Endothelial cell of umbilical vein (primary cell): ENCODE measurements at regions of chr12 and their contacts with region 1.

Region 1: DNA sequence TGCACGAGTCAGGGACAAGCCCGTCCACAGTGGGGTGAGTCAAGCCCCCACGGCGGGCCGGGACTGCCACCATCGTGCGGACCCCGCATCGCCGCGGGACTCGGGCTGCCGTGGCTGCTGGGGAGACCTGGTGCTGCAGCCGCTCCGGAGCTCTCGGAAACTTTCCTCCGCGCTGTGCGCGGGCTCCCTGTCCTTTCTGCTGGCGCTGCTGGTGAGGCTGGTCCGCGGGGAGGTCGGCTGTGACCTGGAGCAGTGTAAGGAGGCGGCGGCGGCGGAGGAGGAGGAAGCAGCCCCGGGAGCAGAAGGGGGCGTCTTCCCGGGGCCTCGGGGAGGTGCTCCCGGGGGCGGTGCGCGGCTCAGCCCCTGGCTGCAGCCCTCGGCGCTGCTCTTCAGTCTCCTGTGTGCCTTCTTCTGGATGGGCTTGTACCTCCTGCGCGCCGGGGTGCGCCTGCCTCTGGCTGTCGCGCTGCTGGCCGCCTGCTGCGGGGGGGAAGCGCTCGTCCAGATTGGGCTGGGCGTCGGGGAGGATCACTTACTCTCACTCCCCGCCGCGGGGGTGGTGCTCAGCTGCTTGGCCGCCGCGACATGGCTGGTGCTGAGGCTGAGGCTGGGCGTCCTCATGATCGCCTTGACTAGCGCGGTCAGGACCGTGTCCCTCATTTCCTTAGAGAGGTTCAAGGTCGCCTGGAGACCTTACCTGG is 1.1 kb downstream of the PDE3A start:
- DNase-seq: peak; percentile 85
- H3K4me3 ChIP-seq: peak overlapping the region; percentile 87 to 99 (median 97)
- H3K27ac ChIP-seq: peak overlapping the region; percentile 75
- H3K4me1 ChIP-seq: peaks cover 28% of the 10 kb centered on the region
- H3K27me3 ChIP-seq: no peaks in the 10 kb centered on the region
- CTCF ChIP-seq: peak in 1 of 2 donors; percentile 23
- POLR2A ChIP-seq: peak; percentile 71

Region 2: GRCh38 chr12:19994970-19995369 is 374.5 kb before region 1 on chr12:
- CTCF ChIA-PET with region 1: interaction called, 3 read pairs
- POLR2A ChIA-PET with region 1: no interaction called
- dilution Hi-C with region 1: no loop called
- intact Hi-C with region 1: loop called (anchors 2 kb)
- DNase-seq: peak; percentile 63
- H3K4me3 ChIP-seq: no peak overlapping the region
- H3K27ac ChIP-seq: no peak overlapping the region
- H3K4me1 ChIP-seq: peaks cover 20% of the 10 kb centered on the region
- H3K27me3 ChIP-seq: no peaks in the 10 kb centered on the region
- CTCF ChIP-seq: peak in 1 of 2 donors; percentile 10
- POLR2A ChIP-seq: no peak

Region 3: GRCh38 chr12:20097626-20098025 is 271.8 kb before region 1 on chr12:
- CTCF ChIA-PET with region 1: no interaction called
- POLR2A ChIA-PET with region 1: no interaction called
- dilution Hi-C with region 1: no loop called
- intact Hi-C with region 1: no loop called
- DNase-seq: peak; percentile 52
- H3K4me3 ChIP-seq: no peak overlapping the region
- H3K27ac ChIP-seq: no peak overlapping the region
- H3K4me1 ChIP-seq: peaks cover 2% of the 10 kb centered on the region
- H3K27me3 ChIP-seq: no peaks in the 10 kb centered on the region
- CTCF ChIP-seq: no peak
- POLR2A ChIP-seq: no peak

Region 4: DNA sequence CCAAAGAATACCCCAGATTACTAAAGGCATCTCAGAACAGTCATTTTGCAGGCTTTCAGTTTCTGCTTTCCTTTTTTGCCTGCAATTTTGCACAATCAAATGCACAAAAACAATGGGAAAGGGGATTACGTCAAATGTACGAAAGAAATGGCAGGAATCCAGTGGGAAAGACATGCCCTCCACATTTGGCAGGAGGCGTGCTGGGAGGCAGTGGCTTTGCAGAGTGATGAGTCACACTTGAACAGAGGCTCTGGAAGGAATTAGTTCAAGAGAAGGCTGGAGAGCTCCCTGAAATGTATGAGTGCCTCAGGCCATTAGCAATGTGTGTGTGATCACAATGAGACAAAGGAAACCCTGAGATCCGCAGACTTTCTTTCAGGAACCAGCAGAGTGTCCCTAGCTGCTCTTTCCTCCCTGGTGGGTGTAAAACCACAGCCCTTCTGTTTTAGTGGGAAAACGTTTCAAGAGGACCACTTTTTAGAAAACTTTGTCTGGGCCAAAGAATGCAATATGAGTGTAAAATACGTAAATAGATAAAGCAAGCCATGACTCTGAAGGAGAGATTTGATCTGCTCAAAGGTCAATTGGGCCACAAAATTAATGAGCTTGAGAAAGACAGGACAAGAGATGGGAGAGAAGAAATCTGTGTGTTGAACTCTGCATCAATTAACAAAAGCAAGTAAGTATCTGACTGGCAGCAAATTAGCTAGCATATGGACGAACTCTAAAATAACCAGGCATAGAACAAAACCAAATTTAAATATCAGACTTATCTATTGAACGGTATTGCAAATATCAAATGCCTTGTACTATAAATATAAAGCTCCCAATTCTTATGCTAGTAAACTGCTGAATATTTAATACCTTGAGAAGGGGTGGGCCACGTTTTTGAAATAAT is 156.5 kb before region 1 on chr12:
- CTCF ChIA-PET with region 1: no interaction called
- POLR2A ChIA-PET with region 1: no interaction called
- dilution Hi-C with region 1: no loop called
- intact Hi-C with region 1: loop called (anchors 2 kb)
- DNase-seq: peak; percentile 99
- H3K4me3 ChIP-seq: peak overlapping the region in 1 of 3 experiments; percentile 15
- H3K27ac ChIP-seq: peak overlapping the region; percentile 77
- H3K4me1 ChIP-seq: peaks cover 12% of the 10 kb centered on the region
- H3K27me3 ChIP-seq: no peaks in the 10 kb centered on the region
- CTCF ChIP-seq: no peak
- POLR2A ChIP-seq: no peak

Region 5: GRCh38 chr12:20350495-20350894 is 19.0 kb before region 1 on chr12:
- CTCF ChIA-PET with region 1: interaction called, 7 read pairs
- POLR2A ChIA-PET with region 1: no interaction called
- dilution Hi-C with region 1: no loop called
- intact Hi-C with region 1: loop called (anchors 1 kb)
- DNase-seq: peak; percentile 96
- H3K4me3 ChIP-seq: no peak overlapping the region
- H3K27ac ChIP-seq: peak overlapping the region; percentile 92
- H3K4me1 ChIP-seq: peaks cover 21% of the 10 kb centered on the region
- H3K27me3 ChIP-seq: no peaks in the 10 kb centered on the region
- CTCF ChIP-seq: no peak
- POLR2A ChIP-seq: no peak

Region 6: DNA sequence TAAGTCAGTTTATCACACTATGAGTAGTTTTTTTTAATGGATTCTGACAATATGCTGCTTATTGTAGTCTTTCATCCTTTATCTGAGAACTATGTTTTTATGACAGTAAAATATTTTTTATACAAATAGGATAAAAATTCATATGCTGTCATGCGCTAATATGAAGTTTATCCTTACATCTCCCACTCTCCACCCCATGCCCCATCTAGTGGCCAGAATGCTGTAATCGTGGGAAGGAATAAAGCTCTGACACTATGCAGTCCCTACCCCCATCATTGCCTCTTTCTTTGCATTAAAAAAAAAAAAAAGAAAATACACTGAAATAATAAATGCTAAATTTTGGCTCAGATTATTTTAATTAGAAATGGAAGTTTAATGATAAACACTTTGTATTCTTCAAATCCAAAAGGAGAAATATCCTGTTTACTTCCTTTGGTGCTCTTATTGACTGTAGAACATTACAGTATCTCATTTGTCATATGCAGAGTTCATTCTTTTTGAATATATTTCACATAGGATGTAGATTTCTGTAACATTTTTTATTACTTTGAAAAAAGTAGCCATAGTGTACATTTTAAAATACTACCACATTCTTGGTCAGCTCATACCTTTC is 179.8 kb after region 1 on chr12:
- CTCF ChIA-PET with region 1: interaction called, 22 read pairs
- POLR2A ChIA-PET with region 1: no interaction called
- dilution Hi-C with region 1: no loop called
- intact Hi-C with region 1: no loop called
- DNase-seq: peak; percentile 80
- H3K4me3 ChIP-seq: no peak overlapping the region
- H3K27ac ChIP-seq: no peak overlapping the region
- H3K4me1 ChIP-seq: peaks cover 9% of the 10 kb centered on the region
- H3K27me3 ChIP-seq: no peaks in the 10 kb centered on the region
- CTCF ChIP-seq: peak; percentile 47 to 58
- POLR2A ChIP-seq: no peak

Region 7: DNA sequence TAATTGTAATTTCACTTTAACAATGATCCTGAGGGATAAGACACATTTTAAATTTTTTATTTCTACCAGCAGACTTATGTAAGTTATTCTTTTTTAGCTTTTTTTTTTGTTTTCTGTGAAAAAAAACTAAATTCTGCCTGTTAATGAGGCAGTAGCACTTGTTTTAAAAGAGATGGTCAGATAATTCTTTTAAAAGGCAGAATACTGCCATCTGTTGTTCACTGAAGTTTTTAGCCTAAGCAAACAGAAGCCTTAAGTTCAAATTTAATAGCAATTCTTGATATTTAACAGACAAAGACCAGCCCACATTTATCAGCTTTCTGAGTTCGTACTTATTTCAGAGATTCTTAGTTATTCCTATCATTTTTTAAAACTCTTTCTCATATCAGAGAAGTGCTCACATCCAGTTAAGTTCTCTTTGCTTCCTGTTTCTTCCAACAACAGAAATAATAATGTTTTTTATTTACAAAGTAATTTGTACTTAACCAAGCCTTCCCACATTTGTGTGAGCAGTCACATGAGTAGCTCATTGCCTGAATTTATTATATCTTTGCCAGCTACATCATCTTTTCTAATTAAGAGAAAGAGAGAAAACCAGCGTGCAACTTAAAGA is 232.3 kb after region 1 on chr12:
- CTCF ChIA-PET with region 1: interaction called, 3 read pairs
- POLR2A ChIA-PET with region 1: no interaction called
- dilution Hi-C with region 1: no loop called
- intact Hi-C with region 1: loop called (anchors 2 kb)
- DNase-seq: peak; percentile 75
- H3K4me3 ChIP-seq: no peak overlapping the region
- H3K27ac ChIP-seq: no peak overlapping the region
- H3K4me1 ChIP-seq: peaks cover 9% of the 10 kb centered on the region
- H3K27me3 ChIP-seq: no peaks in the 10 kb centered on the region
- CTCF ChIP-seq: peak in 1 of 2 donors; percentile 24
- POLR2A ChIP-seq: no peak